ENCODE measurements at regions of chr3 and their contacts with region 1.

Region 1: GRCh38 chr3:107117922-107118536 is 259.2 kb upstream of the CCDC54 start:
- DNase-seq: peak; percentile 41 to 66
- H3K4me3 ChIP-seq: no peak overlapping the region
- H3K27ac ChIP-seq: no peak overlapping the region
- H3K4me1 ChIP-seq: no peaks in the 10 kb centered on the region
- H3K27me3 ChIP-seq: no peaks in the 10 kb centered on the region
- CTCF ChIP-seq: peak; percentile 10 to 72 (median 70)
- EP300 ChIP-seq: no peak
- POLR2A ChIP-seq: no peak
- RAD21 ChIP-seq: peak; percentile 93 to 95

Region 2: DNA sequence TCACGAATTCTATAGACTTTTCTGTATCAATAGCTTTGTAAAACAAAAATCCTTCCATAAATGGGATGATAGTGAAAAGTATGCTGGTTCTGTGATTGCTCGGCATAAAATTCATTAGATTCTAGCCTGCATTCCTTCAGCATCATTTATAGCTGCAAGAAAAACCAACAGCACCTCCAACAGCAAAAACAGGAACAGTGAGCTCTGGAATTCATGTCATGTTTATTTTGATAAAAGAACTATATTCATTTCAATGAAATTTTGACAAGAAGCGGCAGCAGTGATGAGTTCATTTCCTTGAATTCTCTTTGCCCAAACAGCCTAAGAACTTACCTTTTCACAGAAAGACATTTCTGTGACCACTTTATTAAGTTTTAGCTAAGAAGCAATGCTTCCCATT is 256.0 kb before region 1 on chr3:
- CTCF ChIA-PET with region 1: no interaction called
- POLR2A ChIA-PET with region 1: no interaction called
- DNase-seq: no peak
- H3K4me3 ChIP-seq: no peak overlapping the region
- H3K27ac ChIP-seq: no peak overlapping the region
- H3K4me1 ChIP-seq: no peaks in the 10 kb centered on the region; a peak in 1 of 7 replicates
- H3K27me3 ChIP-seq: no peaks in the 10 kb centered on the region
- CTCF ChIP-seq: no peak
- EP300 ChIP-seq: no peak
- POLR2A ChIP-seq: no peak
- RAD21 ChIP-seq: peak in 1 of 2 experiments; percentile 44; a peak in 2 of 4 replicates

Region 3: DNA sequence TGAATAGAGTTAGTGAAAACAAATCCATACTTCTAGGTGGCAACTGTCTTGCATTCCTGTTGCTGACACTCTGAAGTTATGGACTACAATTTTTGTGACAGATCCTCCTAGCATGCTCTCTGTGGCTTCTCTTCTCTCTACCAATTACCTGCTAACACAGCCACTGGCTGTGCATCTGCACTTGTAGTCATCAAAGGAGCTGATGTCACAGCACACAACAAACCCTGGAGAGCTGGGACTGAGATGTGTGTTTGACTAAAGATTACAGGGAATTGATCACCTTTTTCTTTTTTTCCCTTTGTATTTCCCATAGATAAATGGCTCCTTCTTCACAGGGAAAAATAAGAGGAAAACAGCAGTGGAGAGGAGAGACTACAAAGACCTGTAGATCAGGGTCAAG is 19.2 kb before region 1 on chr3:
- CTCF ChIA-PET with region 1: interaction called, 18 read pairs
- POLR2A ChIA-PET with region 1: no interaction called
- DNase-seq: no peak
- H3K4me3 ChIP-seq: no peak overlapping the region
- H3K27ac ChIP-seq: no peak overlapping the region
- H3K4me1 ChIP-seq: no peaks in the 10 kb centered on the region
- H3K27me3 ChIP-seq: no peaks in the 10 kb centered on the region
- CTCF ChIP-seq: no peak
- EP300 ChIP-seq: no peak
- POLR2A ChIP-seq: no peak
- RAD21 ChIP-seq: no peak

Region 4: GRCh38 chr3:107106316-107106715 is 11.7 kb before region 1 on chr3:
- CTCF ChIA-PET with region 1: interaction called, 18 read pairs
- POLR2A ChIA-PET with region 1: no interaction called
- DNase-seq: no peak
- H3K4me3 ChIP-seq: no peak overlapping the region
- H3K27ac ChIP-seq: no peak overlapping the region
- H3K4me1 ChIP-seq: no peaks in the 10 kb centered on the region
- H3K27me3 ChIP-seq: no peaks in the 10 kb centered on the region
- CTCF ChIP-seq: no peak
- EP300 ChIP-seq: no peak
- POLR2A ChIP-seq: no peak
- RAD21 ChIP-seq: no peak

Measured in H1 (cell line).